ENCODE measurements at regions of chr10 and their contacts with region 1.

Region 1: DNA sequence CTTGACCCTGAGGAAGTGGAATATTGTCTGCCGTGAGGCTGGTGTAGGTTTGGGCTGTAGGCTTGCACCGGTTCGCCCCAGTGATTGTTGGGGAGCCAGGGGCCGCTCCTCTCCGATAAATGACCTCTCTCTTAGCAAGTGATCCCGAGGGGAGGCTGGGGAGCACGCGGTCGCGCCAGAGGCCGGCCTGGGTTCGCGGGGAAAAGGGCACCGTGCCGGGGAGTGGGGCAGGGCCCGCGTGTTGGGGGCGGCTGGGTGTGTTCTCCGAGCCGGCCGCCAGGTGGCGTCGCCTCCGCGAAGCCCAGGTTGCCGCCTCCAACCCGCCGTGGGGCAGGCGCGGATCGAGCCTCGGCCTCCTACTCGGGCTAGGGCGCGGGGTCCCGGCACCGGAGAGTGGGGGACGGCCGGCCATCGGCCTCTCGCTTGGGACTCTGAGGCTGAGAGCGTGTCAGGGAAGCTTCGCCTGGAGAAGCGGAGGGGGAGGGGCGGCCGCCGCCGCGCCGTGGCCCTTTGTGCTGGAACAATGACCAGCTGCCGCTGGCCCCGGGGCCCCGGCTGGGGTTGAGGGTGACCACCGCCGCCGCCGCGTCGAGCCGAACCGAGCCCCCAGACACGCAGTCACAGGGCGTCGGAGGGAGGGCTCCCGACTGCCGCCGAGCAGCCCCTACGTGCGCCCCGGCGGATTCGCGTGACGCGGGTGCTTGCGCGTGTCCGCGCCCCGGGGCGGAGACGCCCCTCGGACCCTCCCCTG is 442 bp upstream of the LZTS2 start:
- DNase-seq: peak; percentile 74 to 84
- ATAC-seq: peak; percentile 40 to 64
- H3K4me3 ChIP-seq: peak overlapping the region; percentile 92
- H3K27ac ChIP-seq: peak overlapping the region; percentile 98
- H3K4me1 ChIP-seq: peaks cover 27% of the 10 kb centered on the region
- CTCF ChIP-seq: peak; percentile 83
- EP300 ChIP-seq: no peak
- POLR2A ChIP-seq: peak; percentile 61
- RAD21 ChIP-seq: peak; percentile 21 to 57; a peak in 4 of 5 replicates

Region 2: GRCh38 chr10:100979791-100980272 is 19.3 kb before region 1 on chr10:
- CTCF ChIA-PET with region 1: interaction called, 83 read pairs
- POLR2A ChIA-PET with region 1: no interaction called
- DNase-seq: no peak
- ATAC-seq: no peak
- H3K4me3 ChIP-seq: no peak overlapping the region
- H3K27ac ChIP-seq: no peak overlapping the region
- H3K4me1 ChIP-seq: no peaks in the 10 kb centered on the region; the same call in 2 of the 3 replicates
- CTCF ChIP-seq: no peak
- EP300 ChIP-seq: no peak
- POLR2A ChIP-seq: no peak
- RAD21 ChIP-seq: no peak

Region 3: GRCh38 chr10:101012525-101013364 is 13.6 kb after region 1 on chr10:
- CTCF ChIA-PET with region 1: interaction called, 608 read pairs
- POLR2A ChIA-PET with region 1: interaction called, 7 read pairs
- DNase-seq: peak; percentile 94 to 97
- ATAC-seq: peak; percentile 78 to 90
- H3K4me3 ChIP-seq: no peak overlapping the region
- H3K27ac ChIP-seq: peak overlapping the region; percentile 15 to 70; a peak in 5 of 6 replicates
- H3K4me1 ChIP-seq: peaks cover 32% of the 10 kb centered on the region
- CTCF ChIP-seq: peak; percentile 95
- EP300 ChIP-seq: no peak
- POLR2A ChIP-seq: no peak
- RAD21 ChIP-seq: peak; percentile 54 to 67

Region 4: GRCh38 chr10:101042667-101043355 is 43.6 kb after region 1 on chr10:
- CTCF ChIA-PET with region 1: interaction called, 24 read pairs
- POLR2A ChIA-PET with region 1: interaction called, 3 read pairs
- DNase-seq: peak; percentile 95 to 96
- ATAC-seq: peak; percentile 89 to 93
- H3K4me3 ChIP-seq: peak overlapping the region; percentile 47
- H3K27ac ChIP-seq: peak overlapping the region; percentile 83 to 93
- H3K4me1 ChIP-seq: peaks cover 24% of the 10 kb centered on the region
- CTCF ChIP-seq: no peak
- EP300 ChIP-seq: no peak
- POLR2A ChIP-seq: peak; percentile 55
- RAD21 ChIP-seq: no peak

Region 5: DNA sequence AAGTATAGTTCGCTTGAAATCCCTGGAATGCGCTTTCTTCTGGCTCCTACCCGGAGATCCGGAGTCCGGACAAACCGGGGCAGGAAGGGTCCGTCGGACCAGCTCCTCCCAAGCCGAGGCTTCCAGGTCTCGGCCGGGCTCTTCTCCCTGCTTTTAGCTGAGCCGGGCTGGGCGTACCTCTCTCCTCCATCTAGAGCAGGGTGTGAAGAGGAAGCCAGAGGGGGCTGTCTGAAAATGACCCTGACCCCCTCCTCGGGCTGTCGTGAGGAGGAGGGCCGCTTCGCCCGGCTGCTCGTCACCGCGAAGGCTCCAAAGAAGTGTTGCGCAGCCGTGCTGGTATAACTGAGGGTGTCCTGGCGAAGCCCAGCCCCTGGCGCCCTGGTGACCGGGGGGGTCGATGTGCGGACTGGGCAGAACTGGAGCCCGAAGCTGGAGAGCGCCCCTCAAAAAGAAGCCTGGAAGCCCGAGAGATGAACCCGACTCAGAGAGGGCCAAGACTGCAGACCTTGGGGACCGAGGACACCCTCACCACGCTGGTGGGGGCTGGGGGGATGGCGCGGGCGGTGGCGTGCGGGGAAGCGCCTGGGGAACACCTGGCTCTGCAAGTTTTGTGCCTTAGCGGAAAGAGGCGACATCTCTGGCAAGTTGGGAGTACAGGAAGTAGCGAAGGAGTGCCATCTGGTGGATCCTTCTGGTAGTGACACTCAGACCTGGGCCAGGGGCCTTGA is 68.4 kb after region 1 on chr10:
- CTCF ChIA-PET with region 1: interaction called, 10 read pairs
- POLR2A ChIA-PET with region 1: no interaction called
- DNase-seq: peak; percentile 84 to 90
- ATAC-seq: peak; percentile 37 to 67
- H3K4me3 ChIP-seq: peak overlapping the region; percentile 57
- H3K27ac ChIP-seq: peak overlapping the region; percentile 87 to 91
- H3K4me1 ChIP-seq: peaks cover 21% of the 10 kb centered on the region
- CTCF ChIP-seq: peak; percentile 89
- EP300 ChIP-seq: no peak
- POLR2A ChIP-seq: peak; percentile 21; the same call in 1 of the 2 replicates
- RAD21 ChIP-seq: peak; percentile 78 to 82

Measured in A549 (cell line).